Cardiac septum (tissue), 1 donor: ENCODE measurements at regions of chr11 and their contacts with region 1.

Region 1: GRCh38 chr11:3037040-3037944 is 19.9 kb downstream of the CARS1 start:
- DNase-seq: peak; percentile 89

Region 2: DNA sequence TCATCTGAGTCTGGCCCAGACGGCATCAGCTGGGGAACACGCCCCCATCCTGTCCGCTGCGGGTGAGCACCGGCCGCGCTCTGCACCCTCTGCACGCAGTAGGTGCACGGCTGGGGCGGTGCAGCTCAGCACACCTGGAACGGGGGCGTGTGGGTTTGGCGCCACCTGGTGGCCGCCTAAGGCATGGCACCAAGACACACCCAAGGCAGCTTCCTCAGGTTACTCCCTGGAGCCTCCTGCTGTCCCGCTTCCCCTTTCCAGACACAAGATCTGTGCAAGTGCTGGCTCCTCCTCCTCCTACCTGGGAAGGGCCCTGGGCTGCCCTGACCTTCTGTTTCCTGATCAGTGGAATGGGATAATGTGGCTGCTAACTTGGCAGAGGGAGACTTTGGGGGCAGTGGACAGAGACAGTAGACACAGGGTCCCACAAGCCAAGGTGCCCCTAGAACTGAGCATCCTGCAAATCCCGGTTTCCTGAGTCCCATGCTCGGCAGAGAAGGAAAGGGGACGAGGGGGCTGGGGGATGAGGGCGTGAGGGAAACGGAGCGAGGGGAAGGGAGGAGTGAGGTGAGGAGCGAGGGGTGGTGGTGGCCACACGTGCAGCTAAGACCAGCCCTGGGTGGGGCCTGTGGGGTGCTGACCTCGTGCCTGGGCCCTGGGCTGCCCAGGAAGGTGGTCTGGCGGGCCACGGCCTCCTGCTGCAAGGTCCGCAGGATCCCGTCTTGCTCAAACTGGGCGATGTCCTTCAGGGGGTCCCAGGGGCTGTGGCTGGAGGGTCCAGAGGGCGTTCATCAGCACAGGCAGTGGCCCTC is 54.7 kb after region 1 on chr11:
- intact Hi-C with region 1: loop called (anchors 1 kb)
- DNase-seq: peak; percentile 88

Region 3: DNA sequence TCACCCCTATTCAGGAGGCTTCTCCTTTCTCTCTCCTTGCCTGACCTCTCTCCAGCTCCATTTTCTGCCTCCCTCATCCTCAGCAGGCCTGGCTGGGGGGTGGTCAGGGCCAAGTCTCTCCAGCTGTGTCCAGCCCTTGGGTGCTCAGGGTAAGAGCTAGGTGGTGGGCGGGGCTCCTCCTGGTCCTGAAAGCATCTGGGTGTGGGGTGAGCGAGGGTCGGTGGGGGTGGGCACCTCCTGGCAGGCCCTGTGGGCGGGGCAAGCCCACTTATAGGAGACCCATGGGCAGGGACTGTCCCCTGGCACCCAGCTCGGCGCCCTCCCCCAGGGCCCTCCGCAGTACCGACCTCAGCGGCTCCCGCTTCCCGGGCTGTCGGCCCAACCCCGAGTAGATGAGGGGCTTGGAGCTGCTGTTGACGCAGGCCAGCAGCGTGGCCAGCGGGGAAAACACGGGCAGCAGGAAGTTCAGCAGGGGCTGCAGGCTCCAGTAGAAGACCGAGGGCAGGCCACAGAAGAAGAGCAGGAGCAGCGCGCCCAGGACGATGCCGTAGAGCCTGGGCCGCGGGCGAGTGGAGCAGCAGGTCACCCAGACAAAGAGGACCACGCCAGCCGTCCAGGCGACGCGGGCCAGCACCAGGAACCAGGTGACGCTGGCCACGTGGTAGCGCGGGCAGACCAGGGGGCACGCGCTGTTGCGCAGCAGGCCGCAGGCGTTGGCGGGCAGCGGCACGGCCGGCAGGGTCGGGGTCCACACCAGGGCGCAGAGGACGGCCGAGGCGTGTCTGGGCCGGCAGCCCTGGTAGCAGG is 180.6 kb after region 1 on chr11:
- intact Hi-C with region 1: loop called (anchors 2 kb)
- DNase-seq: peak; percentile 67